ENCODE measurements at regions of chr2 and their contacts with region 1.

Region 1: DNA sequence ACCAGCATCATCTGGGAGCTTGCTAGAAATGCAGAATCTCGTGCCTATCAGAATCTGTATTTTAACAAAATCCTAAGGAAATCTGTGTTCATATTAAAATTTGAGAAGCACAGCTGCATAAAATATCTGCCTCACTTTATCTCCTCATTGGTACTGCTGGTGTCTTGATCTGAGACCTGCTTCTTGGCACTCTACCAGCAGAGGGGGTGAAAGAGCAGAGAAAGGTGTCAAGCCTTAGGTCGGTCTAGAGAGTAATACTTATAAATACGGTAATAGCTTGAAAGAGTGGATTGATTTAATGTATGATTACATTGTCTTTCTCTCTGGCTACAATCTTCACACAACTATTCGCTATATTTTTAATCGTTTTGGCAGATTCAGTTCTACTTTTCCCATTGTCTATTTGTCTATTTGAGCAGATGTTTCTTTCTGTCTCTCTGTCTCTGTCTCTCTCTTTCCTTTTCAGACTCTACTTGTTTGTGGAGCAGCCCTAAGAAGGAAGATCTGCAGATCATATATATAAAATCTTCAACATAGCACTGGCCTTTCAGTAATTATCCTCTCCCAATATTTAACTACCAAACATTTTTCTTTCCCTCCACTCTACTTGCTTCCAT is 1.7 kb upstream of the GCG start:
- DNase-seq: peak; percentile 27 to 72
- H3K4me3 ChIP-seq: no peak overlapping the region
- H3K27ac ChIP-seq: no peak overlapping the region
- H3K4me1 ChIP-seq: peaks cover 0 to 3% (median 0%) of the 10 kb centered on the region in 4 experiments; a peak in 1 of 7 replicates
- H3K27me3 ChIP-seq: no peaks in the 10 kb centered on the region
- CTCF ChIP-seq: peak; percentile 11 to 80 (median 74)
- EP300 ChIP-seq: no peak
- POLR2A ChIP-seq: no peak
- RAD21 ChIP-seq: peak; percentile 74 to 81

Region 2: DNA sequence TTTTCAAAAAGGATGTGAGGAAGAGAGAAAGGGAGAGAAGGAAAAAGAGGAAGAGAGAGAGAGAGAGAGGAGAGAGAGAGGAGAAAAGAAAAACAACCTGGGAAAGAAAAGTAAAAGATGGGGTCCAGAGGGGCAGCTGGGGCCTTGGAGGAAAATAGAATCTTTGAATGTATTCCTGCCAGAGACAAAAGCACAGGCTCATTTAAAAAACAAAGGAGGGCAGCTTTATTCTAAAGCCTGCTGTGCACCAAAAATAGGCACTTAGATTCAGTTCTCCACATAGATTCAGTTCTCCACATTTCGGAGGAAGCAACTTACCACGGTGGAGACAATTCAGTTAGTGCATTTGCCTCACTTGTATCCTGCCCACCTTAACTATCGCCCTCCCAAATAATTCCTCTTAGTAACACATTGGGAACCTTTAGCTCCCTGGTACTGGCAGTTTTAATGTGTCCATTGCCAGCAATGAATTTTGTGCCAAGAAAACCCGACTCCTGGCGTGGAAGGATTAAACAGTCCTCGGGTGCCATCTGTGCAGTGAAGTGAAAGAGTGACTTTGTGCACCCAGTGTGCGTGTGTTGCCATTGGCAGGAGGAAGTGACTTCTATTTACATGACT is 151.0 kb before region 1 on chr2:
- CTCF ChIA-PET with region 1: interaction called, 11 read pairs
- POLR2A ChIA-PET with region 1: no interaction called
- DNase-seq: no peak
- H3K4me3 ChIP-seq: peak overlapping the region in 2 of 4 experiments; percentile 6 to 8; a peak in 1 of 8 replicates
- H3K27ac ChIP-seq: 0 out of 2 replicates have a peak overlapping the region, but pooled peaks have one; percentile 38
- H3K4me1 ChIP-seq: peaks cover 5 to 18% (median 12%) of the 10 kb centered on the region in 4 experiments; a peak in 6 of 7 replicates
- H3K27me3 ChIP-seq: no peaks in the 10 kb centered on the region
- CTCF ChIP-seq: no peak
- EP300 ChIP-seq: no peak
- POLR2A ChIP-seq: no peak
- RAD21 ChIP-seq: no peak

Region 3: DNA sequence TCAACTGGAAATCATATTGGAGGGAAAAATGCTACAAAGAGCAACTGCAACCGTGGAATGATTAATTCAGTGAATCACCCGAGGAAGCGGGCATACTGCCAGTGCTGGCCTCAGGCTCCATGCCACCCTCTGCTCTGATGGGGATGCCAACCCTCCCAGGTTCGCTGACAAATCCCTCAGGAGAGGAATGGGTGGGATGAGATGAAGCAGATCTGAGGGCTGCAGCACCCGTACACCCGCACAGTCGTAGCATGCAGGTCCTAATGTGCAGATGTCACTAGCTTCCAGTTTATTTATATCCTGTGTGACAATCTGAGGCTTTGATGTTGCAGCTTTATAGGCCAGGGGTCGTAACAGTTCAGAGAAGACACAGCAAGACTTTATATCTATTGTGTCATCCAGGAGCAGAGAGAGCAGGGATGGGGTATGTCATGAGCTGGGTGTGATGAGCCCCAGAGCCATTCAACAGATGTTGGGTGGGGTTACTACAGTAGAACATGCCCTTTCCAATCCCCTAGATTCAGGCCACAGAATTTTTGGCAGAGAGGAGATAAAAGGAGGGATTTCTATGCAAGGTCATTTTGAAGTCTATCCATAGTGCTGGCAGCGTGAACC is 124.3 kb before region 1 on chr2:
- CTCF ChIA-PET with region 1: no interaction called
- POLR2A ChIA-PET with region 1: no interaction called
- DNase-seq: no peak
- H3K4me3 ChIP-seq: no peak overlapping the region
- H3K27ac ChIP-seq: no peak overlapping the region
- H3K4me1 ChIP-seq: peaks cover 0 to 4% (median 1%) of the 10 kb centered on the region in 4 experiments; a peak in 3 of 7 replicates
- H3K27me3 ChIP-seq: no peaks in the 10 kb centered on the region
- CTCF ChIP-seq: no peak
- EP300 ChIP-seq: no peak
- POLR2A ChIP-seq: no peak
- RAD21 ChIP-seq: no peak

Region 4: DNA sequence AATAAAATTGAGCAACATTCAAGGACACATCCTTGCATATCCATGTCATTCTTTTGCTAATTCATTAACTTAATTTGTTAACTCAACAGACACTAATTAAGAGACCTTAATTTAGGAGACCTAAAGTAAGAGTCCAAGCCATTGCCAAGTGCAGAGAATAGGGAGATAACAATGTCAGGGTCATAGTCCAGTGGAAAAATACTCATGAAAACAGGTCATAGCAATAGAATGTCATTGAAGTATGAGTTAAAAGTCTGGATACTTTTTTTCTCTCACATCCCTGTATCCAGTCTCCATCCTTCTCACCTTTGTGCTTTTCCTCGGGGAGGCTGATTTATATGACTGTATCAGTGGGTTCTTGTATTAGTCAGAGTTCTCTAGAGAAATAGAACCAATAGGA is 53.1 kb before region 1 on chr2:
- CTCF ChIA-PET with region 1: no interaction called
- POLR2A ChIA-PET with region 1: no interaction called
- DNase-seq: no peak
- H3K4me3 ChIP-seq: no peak overlapping the region
- H3K27ac ChIP-seq: no peak overlapping the region
- H3K4me1 ChIP-seq: no peaks in the 10 kb centered on the region
- H3K27me3 ChIP-seq: no peaks in the 10 kb centered on the region
- CTCF ChIP-seq: no peak
- EP300 ChIP-seq: no peak
- POLR2A ChIP-seq: no peak
- RAD21 ChIP-seq: no peak

Region 5: GRCh38 chr2:162138310-162138709 is 15.4 kb before region 1 on chr2:
- CTCF ChIA-PET with region 1: interaction called, 17 read pairs
- POLR2A ChIA-PET with region 1: no interaction called
- DNase-seq: no peak
- H3K4me3 ChIP-seq: no peak overlapping the region
- H3K27ac ChIP-seq: no peak overlapping the region
- H3K4me1 ChIP-seq: no peaks in the 10 kb centered on the region
- H3K27me3 ChIP-seq: peaks cover 0 to 1% (median 0%) of the 10 kb centered on the region in 4 experiments; a peak in 1 of 7 replicates
- CTCF ChIP-seq: no peak
- EP300 ChIP-seq: no peak
- POLR2A ChIP-seq: no peak
- RAD21 ChIP-seq: no peak

Region 6: GRCh38 chr2:162164802-162165201 is 11.1 kb after region 1 on chr2:
- CTCF ChIA-PET with region 1: interaction called, 48 read pairs
- POLR2A ChIA-PET with region 1: no interaction called
- DNase-seq: no peak
- H3K4me3 ChIP-seq: no peak overlapping the region
- H3K27ac ChIP-seq: no peak overlapping the region
- H3K4me1 ChIP-seq: no peaks in the 10 kb centered on the region
- H3K27me3 ChIP-seq: no peaks in the 10 kb centered on the region
- CTCF ChIP-seq: no peak
- EP300 ChIP-seq: no peak
- POLR2A ChIP-seq: no peak
- RAD21 ChIP-seq: no peak

Region 7: GRCh38 chr2:162174746-162175145 is 21.0 kb after region 1 on chr2:
- CTCF ChIA-PET with region 1: interaction called, 48 read pairs
- POLR2A ChIA-PET with region 1: no interaction called
- DNase-seq: no peak
- H3K4me3 ChIP-seq: no peak overlapping the region
- H3K27ac ChIP-seq: no peak overlapping the region
- H3K4me1 ChIP-seq: peaks cover 0 to 3% (median 1%) of the 10 kb centered on the region in 4 experiments; a peak in 2 of 7 replicates
- H3K27me3 ChIP-seq: peaks cover 0 to 1% (median 0%) of the 10 kb centered on the region in 4 experiments; a peak in 1 of 7 replicates
- CTCF ChIP-seq: no peak
- EP300 ChIP-seq: no peak
- POLR2A ChIP-seq: no peak
- RAD21 ChIP-seq: no peak

Region 8: DNA sequence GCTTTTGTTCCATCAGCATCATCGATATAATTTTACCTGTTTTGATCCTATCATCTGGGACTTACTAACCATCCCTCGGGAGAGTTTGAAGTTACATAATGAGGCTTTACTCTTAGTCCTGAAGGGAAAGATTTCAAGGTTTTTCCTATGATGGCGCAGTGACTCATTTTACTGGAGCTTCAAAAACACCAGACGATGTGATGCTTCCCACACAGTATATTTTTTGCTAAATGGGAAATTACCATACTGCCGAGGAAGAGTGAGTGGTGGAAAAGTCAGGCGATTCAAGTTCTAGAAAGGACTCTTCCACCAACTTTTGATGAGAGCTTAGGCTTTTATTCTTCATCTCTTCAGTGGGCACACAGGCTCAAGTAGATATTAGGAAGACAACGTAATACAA is 42.9 kb after region 1 on chr2:
- CTCF ChIA-PET with region 1: interaction called, 11 read pairs
- POLR2A ChIA-PET with region 1: no interaction called
- DNase-seq: no peak
- H3K4me3 ChIP-seq: no peak overlapping the region
- H3K27ac ChIP-seq: no peak overlapping the region
- H3K4me1 ChIP-seq: no peaks in the 10 kb centered on the region
- H3K27me3 ChIP-seq: peaks cover 0 to 1% (median 0%) of the 10 kb centered on the region in 4 experiments; a peak in 1 of 7 replicates
- CTCF ChIP-seq: no peak
- EP300 ChIP-seq: no peak
- POLR2A ChIP-seq: no peak
- RAD21 ChIP-seq: no peak

Measured in H1 (cell line).